Panc1 (cell line): ENCODE measurements at regions of chr3 and their contacts with region 1.

Region 1: DNA sequence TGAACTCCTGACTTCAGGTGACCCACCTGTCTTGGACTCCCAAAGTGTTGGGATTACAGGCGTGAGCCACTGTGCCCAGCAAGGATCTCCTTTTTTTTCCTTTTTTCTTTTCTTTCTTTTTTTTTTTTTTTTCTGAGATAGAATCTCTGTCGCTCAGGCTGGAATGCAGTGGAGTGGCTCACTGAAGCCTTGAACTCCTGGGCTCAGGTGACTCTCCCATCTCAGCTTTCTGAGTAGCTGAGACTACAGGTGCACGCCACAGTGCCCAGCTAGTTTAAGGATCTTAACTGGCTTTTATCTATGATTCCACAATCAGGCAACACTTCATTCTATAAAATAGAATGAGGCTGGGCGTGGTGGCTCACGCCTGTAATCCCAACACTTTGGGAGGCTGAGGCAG is 16.3 kb upstream of the NICN1 start:
- DNase-seq: no peak
- ATAC-seq: no peak
- H3K4me3 ChIP-seq: no peak overlapping the region
- H3K27ac ChIP-seq: no peak overlapping the region
- H3K4me1 ChIP-seq: peaks cover 5% of the 10 kb centered on the region; the same call in 1 of the 2 replicates
- H3K27me3 ChIP-seq: no peaks in the 10 kb centered on the region
- CTCF ChIP-seq: no peak

Region 2: GRCh38 chr3:48347500-48347899 is 1097.9 kb before region 1 on chr3:
- CTCF ChIA-PET with region 1: no interaction called
- POLR2A ChIA-PET with region 1: no interaction called
- in situ Hi-C with region 1: no loop called
- intact Hi-C with region 1: no loop called
- DNase-seq: no peak
- ATAC-seq: no peak
- H3K4me3 ChIP-seq: no peak overlapping the region
- H3K27ac ChIP-seq: no peak overlapping the region
- H3K4me1 ChIP-seq: no peaks in the 10 kb centered on the region
- H3K27me3 ChIP-seq: no peaks in the 10 kb centered on the region
- CTCF ChIP-seq: no peak

Region 3: DNA sequence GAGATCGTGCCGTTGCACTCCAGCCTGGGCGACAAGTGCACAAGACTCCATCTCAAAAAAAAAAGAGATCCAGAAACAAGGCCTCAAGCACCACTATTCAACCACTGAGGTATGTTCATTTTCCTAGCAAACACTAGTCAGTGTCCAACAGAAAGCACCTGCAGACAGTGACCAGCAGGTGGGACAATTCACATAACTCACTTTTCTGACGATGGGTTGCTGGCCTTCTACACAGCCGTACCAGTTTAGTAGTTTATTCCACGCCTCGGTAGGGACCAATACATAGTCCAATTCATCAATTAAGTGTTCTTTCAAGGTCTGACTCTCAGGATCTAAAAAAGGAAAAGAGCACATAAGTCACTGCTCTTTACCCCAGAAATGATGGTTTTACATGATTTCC is 117.9 kb before region 1 on chr3:
- CTCF ChIA-PET with region 1: interaction called, 3 read pairs
- POLR2A ChIA-PET with region 1: no interaction called
- in situ Hi-C with region 1: no loop called
- intact Hi-C with region 1: loop called (anchors 5 kb)
- DNase-seq: no peak
- ATAC-seq: no peak
- H3K4me3 ChIP-seq: no peak overlapping the region
- H3K27ac ChIP-seq: no peak overlapping the region
- H3K4me1 ChIP-seq: no peaks in the 10 kb centered on the region
- H3K27me3 ChIP-seq: no peaks in the 10 kb centered on the region
- CTCF ChIP-seq: no peak